ENCODE measurements at regions of chr3 and their contacts with region 1.

Region 1: GRCh38 chr3:192237992-192238608 is 489.2 kb downstream of the FGF12 start:
- DNase-seq: peak in 1 of 5 donors; percentile 51
- ATAC-seq: peak in 2 of 4 donors; percentile 20 to 61
- H3K4me3 ChIP-seq: no peak overlapping the region
- H3K27ac ChIP-seq: no peak overlapping the region
- H3K4me1 ChIP-seq: no peaks in the 10 kb centered on the region
- H3K27me3 ChIP-seq: no peaks in the 10 kb centered on the region
- CTCF ChIP-seq: no peak
- POLR2A ChIP-seq: no peak

Region 2: DNA sequence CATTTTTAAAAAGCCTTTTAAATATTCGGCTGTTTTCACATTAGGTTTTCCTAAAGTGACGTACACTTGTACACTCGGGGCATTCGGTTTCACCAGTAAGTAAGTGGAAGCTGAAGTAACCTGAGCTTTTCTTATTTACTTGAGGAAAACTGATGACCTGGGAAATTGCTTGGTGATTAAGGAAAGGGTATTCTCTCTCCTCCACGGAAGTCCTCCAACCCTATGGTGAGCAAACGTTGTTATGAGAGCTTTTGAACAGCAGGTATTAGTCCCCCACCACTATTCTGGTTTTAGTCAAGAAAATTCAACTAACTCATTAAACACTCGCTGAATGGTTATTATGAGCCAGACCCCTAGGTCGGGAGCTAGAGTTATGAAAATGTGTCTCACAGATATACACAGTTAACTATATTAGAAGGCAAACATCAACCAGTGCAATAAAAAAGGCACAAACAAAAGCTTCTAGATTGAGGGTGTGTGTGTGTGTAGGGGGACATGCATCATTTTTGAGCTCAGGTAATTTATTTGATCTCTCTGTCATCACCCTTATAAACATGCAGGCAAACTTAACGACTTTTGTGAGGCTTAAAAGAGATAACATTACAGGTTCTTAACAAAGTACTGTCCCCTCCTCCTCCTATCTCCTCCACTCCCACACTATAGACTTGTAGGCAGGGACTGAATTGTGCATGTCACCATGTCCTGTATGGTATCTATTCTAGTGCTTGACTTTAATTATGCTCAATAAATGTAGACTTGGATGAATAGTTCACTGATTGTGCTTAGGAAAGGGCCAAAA is 822.8 kb after region 1 on chr3:
- intact Hi-C with region 1: loop called in 1 of 10 experiments (anchors 10 kb)
- DNase-seq: no peak
- ATAC-seq: no peak
- H3K4me3 ChIP-seq: no peak overlapping the region
- H3K27ac ChIP-seq: no peak overlapping the region
- H3K4me1 ChIP-seq: no peaks in the 10 kb centered on the region
- H3K27me3 ChIP-seq: no peaks in the 10 kb centered on the region
- CTCF ChIP-seq: no peak
- POLR2A ChIP-seq: no peak

Measured in heart left ventricle (tissue), 16 donors.